Cardiac septum (tissue), 1 donor: ENCODE measurements at regions of chr9 and their contacts with region 1.

Region 1: GRCh38 chr9:33374634-33375213 is 27.6 kb downstream of the AQP7 start:
- DNase-seq: peak; percentile 76

Region 2: GRCh38 chr9:33415501-33416038 is 40.8 kb after region 1 on chr9:
- intact Hi-C with region 1: loop called (anchors 1 kb)
- DNase-seq: peak; percentile 82

Region 3: DNA sequence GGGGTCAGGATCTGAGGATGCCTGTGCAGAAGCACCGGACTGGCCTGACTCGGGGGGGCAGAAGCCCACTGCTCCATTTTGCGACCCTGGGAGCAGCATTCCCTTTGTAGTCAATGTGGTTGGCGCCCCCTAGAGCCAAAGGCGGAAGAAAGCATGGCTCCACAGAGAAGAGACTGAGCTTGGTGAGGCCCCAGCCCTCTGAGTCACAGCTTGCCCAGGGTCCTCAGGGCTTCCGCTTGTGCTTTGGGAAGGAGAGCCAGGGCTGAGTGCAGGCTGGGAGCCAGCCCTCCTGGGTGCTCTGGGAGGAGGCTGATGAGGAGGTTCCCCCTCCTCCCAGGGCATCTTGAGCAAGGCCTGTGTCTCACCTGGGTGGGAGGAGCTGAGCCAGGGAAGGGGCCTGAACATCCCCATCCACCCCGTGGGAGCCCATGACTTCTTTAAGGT is 78.1 kb after region 1 on chr9:
- intact Hi-C with region 1: loop called (anchors 5 kb)
- DNase-seq: no peak

Region 4: DNA sequence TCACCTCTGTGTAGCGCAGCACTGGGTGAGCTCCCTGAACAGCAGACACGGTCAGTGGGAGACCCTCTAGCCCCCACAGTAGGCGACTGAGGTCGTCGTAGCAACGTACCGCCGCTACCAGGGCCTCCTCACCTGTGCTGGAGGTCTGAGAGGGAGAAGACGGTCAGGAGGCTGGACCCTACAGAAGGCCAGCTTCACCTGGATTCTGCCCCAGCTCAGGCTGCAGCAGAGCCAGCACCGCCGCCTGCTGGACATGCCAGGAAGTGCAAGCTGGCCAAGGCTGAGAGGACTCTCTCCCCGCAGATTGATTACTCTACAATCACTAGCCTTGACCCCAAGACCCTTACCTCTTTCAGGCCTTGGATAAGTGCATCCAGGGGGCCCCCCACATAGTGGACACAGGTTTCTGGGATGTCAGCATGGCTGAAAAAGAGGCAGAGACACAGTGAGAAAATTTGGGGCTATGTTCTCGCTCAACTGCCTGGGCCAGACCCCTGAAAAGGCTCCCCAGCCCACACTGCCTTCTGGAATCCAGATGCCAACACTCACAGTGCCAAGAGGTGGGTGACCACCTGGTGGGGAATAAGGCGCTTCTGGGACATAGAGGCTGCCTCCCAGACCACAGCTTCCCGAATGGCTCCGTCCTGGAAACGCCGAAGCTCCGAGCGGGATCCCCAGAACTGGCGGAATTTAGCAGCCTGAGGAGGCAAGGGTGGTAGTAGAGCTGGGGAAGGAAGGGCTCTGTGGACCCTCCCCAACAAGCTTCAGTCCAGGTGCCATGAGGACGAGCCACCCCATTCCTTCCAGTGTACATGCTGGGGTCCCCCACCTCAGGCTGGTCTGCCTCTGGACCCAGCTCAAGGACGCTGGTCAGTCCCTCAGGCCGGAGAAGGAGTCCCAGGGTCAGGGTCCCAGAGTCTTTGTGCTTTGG is 92.1 kb after region 1 on chr9:
- intact Hi-C with region 1: loop called (anchors 5 kb)
- DNase-seq: peak; percentile 89